CD4-positive, alpha-beta T cell (primary cell): ENCODE measurements at regions of chr16 and their contacts with region 1.

Region 1: DNA sequence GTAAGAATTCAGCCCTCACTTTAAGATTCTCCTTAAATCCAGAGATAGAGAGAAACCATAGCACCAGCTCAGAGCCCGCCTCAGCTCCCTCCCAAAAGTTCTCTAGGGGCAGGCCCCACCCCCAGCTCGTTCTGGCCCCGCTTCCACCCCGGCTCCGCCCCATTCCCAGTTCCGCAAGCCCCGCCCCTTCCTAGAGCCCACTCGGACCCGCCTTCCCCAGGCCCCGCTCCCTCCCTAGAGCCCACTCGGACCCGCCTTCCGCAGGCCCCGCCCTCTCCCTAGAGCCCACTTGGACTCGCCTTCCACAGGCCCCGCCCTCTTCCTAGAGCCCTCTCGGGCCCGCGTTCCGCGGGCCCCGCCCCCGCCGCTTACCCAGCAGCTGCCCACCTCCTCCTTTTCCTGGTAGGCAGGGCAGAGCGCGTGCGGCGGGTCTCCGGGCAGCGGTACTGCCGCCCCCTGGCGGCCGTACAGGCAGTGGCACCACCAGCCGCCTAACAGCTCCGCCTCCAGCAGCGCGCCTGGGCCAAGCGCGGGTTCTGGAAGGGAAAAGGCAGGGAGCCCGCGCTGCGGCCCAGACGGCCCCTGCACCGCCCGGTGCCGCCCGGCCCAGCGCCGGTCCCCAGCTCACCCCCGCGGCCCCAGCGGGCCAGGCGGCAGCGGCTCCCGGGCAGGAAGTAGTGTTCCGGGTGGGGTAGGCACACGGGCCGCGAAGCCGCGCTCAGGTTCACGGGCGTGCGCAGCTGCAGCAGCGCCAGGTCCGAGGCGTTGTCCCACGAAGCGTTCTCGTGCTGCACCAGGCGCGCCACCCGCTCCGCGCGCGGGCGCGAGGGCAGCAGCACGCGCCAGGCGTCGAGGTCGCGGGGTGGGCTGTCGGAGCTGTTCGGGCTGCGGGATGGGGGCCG is 6.8 kb upstream of the PRSS8 start:
- DNase-seq: peak; percentile 88 to 100 (median 96)
- ATAC-seq: peak; percentile 86
- H3K4me3 ChIP-seq: peak overlapping the region; percentile 41
- H3K4me3 Mint-ChIP-seq: peak overlapping the region; percentile 84
- H3K27ac ChIP-seq: peak overlapping the region; percentile 29 to 76
- H3K27ac Mint-ChIP-seq: peak overlapping the region; percentile 84
- H3K4me1 ChIP-seq: peaks cover 23% of the 10 kb centered on the region
- H3K4me1 Mint-ChIP-seq: peaks cover 13% of the 10 kb centered on the region
- H3K27me3 ChIP-seq: no peaks in the 10 kb centered on the region
- H3K27me3 Mint-ChIP-seq: peaks cover under 1% of the 10 kb centered on the region
- CTCF ChIP-seq: peak; percentile 79

Region 2: GRCh38 chr16:30957456-30958174 is 184.7 kb before region 1 on chr16 and contains the start of gene SETD1A:
- CTCF ChIA-PET with region 1: interaction called, 9 read pairs
- POLR2A ChIA-PET with region 1: interaction called, 8 read pairs
- intact Hi-C with region 1: loop called in 1 of 2 experiments (anchors 1 kb)
- DNase-seq: peak; percentile 94 to 99 (median 97)
- ATAC-seq: peak; percentile 86
- H3K4me3 ChIP-seq: peak within 1 kb of the TSS; percentile 82
- H3K4me3 Mint-ChIP-seq: peak within 1 kb of the TSS; percentile 97
- H3K27ac ChIP-seq: peak within 1 kb of the TSS; percentile 95
- H3K27ac Mint-ChIP-seq: peak within 1 kb of the TSS; percentile 97
- H3K4me1 ChIP-seq: peaks cover 37% of the 10 kb centered on the region
- H3K4me1 Mint-ChIP-seq: peaks cover 39% of the 10 kb centered on the region
- H3K27me3 ChIP-seq: no peaks in the 10 kb centered on the region
- H3K27me3 Mint-ChIP-seq: no peaks in the 10 kb centered on the region
- CTCF ChIP-seq: no peak
- total RNA-seq, gene SETD1A: 40.1 to 41.2 TPM

Region 3: GRCh38 chr16:30997000-30997886 is 145.1 kb before region 1 on chr16:
- CTCF ChIA-PET with region 1: interaction called, 4 read pairs
- POLR2A ChIA-PET with region 1: interaction called, 3 read pairs
- intact Hi-C with region 1: loop called in 1 of 2 experiments (anchors 1 kb)
- DNase-seq: peak; percentile 71 to 89 (median 78)
- ATAC-seq: peak; percentile 99
- H3K4me3 ChIP-seq: peak overlapping the region; percentile 58
- H3K4me3 Mint-ChIP-seq: peak overlapping the region; percentile 83
- H3K27ac ChIP-seq: no peak overlapping the region
- H3K27ac Mint-ChIP-seq: peak overlapping the region; percentile 39
- H3K4me1 ChIP-seq: peaks cover 13% of the 10 kb centered on the region
- H3K4me1 Mint-ChIP-seq: peaks cover 3% of the 10 kb centered on the region
- H3K27me3 ChIP-seq: no peaks in the 10 kb centered on the region
- H3K27me3 Mint-ChIP-seq: no peaks in the 10 kb centered on the region
- CTCF ChIP-seq: no peak

Region 4: GRCh38 chr16:31055613-31056012 is 86.7 kb before region 1 on chr16:
- CTCF ChIA-PET with region 1: no interaction called
- POLR2A ChIA-PET with region 1: no interaction called
- intact Hi-C with region 1: no loop called
- DNase-seq: no peak
- ATAC-seq: no peak
- H3K4me3 ChIP-seq: no peak overlapping the region
- H3K4me3 Mint-ChIP-seq: no peak overlapping the region
- H3K27ac ChIP-seq: no peak overlapping the region
- H3K27ac Mint-ChIP-seq: no peak overlapping the region
- H3K4me1 ChIP-seq: no peaks in the 10 kb centered on the region
- H3K4me1 Mint-ChIP-seq: no peaks in the 10 kb centered on the region
- H3K27me3 ChIP-seq: no peaks in the 10 kb centered on the region
- H3K27me3 Mint-ChIP-seq: no peaks in the 10 kb centered on the region
- CTCF ChIP-seq: no peak

Region 5: DNA sequence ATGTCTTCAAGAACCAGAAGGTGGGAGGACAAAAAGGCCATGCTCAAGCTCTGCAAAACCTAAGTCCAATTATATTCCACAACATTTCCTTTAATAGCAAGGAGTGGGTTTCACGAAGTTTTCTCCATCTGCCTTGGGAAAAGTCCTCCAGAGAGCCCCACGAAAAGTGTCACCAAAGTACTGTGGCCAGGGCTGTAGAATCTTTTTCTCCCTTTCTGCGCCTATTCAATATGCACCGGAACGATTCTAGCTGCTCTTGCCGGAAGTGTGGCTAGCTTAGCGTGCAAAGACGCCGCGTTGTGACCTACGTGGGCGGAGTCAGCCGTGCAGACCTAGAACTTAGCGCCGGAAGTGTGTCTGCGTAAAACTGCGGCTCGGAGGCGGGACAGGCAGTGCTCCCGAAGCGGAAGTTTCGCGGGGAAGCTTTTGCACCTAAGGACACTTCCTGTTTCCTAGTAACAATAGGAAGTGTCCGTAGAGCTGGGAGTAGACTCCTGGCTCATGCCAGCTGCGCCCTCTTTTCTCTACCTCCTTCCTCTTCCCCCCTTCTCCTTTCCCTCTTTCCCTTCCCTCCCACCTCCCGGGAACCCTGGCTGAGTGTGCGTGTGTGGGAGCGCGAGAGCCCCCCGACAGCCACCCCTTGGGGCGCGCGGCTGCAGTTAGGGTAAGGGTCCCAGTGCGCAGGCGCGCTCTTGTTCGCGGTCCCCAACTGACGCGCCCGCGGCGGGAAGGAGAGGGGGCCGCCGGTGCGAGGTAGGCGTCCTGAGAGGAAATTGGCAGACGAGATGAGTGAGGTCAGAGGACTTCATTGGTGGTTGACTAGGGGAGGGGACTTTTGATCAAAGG is 68.2 kb before region 1 on chr16 and contains the starts of genes ZNF646 and ZNF668:
- CTCF ChIA-PET with region 1: interaction called, 21 read pairs
- POLR2A ChIA-PET with region 1: interaction called, 64 read pairs
- intact Hi-C with region 1: loop called (anchors 1 kb)
- DNase-seq: peak; percentile 94 to 100 (median 97)
- ATAC-seq: peak; percentile 81
- H3K4me3 ChIP-seq: peak within 1 kb of the TSS; percentile 96
- H3K4me3 Mint-ChIP-seq: peak within 1 kb of the TSS; percentile 98
- H3K27ac ChIP-seq: peak within 1 kb of the TSS; percentile 93 to 95
- H3K27ac Mint-ChIP-seq: peak within 1 kb of the TSS; percentile 92
- H3K4me1 ChIP-seq: peaks cover 35% of the 10 kb centered on the region
- H3K4me1 Mint-ChIP-seq: peaks cover 34% of the 10 kb centered on the region
- H3K27me3 ChIP-seq: no peaks in the 10 kb centered on the region
- H3K27me3 Mint-ChIP-seq: no peaks in the 10 kb centered on the region
- CTCF ChIP-seq: no peak
- total RNA-seq, gene ZNF646: 14.3 to 16.6 TPM
- total RNA-seq, gene ZNF668: 4.5 to 6.0 TPM

Region 6: GRCh38 chr16:31108035-31108793 is 34.1 kb before region 1 on chr16 and contains the start of gene BCKDK:
- CTCF ChIA-PET with region 1: interaction called, 7 read pairs
- POLR2A ChIA-PET with region 1: interaction called, 3 read pairs
- intact Hi-C with region 1: loop called in 1 of 2 experiments (anchors 5 kb)
- DNase-seq: peak; percentile 22 to 76 (median 50)
- ATAC-seq: peak; percentile 78
- H3K4me3 ChIP-seq: peak within 1 kb of the TSS; percentile 59
- H3K4me3 Mint-ChIP-seq: peak within 1 kb of the TSS; percentile 76
- H3K27ac ChIP-seq: peak within 1 kb of the TSS in 1 of 2 donors; percentile 60
- H3K27ac Mint-ChIP-seq: peak within 1 kb of the TSS; percentile 53
- H3K4me1 ChIP-seq: peaks cover 25% of the 10 kb centered on the region
- H3K4me1 Mint-ChIP-seq: peaks cover 13% of the 10 kb centered on the region
- H3K27me3 ChIP-seq: no peaks in the 10 kb centered on the region
- H3K27me3 Mint-ChIP-seq: no peaks in the 10 kb centered on the region
- CTCF ChIP-seq: no peak
- total RNA-seq, gene BCKDK: 4.3 to 5.8 TPM

Region 7: DNA sequence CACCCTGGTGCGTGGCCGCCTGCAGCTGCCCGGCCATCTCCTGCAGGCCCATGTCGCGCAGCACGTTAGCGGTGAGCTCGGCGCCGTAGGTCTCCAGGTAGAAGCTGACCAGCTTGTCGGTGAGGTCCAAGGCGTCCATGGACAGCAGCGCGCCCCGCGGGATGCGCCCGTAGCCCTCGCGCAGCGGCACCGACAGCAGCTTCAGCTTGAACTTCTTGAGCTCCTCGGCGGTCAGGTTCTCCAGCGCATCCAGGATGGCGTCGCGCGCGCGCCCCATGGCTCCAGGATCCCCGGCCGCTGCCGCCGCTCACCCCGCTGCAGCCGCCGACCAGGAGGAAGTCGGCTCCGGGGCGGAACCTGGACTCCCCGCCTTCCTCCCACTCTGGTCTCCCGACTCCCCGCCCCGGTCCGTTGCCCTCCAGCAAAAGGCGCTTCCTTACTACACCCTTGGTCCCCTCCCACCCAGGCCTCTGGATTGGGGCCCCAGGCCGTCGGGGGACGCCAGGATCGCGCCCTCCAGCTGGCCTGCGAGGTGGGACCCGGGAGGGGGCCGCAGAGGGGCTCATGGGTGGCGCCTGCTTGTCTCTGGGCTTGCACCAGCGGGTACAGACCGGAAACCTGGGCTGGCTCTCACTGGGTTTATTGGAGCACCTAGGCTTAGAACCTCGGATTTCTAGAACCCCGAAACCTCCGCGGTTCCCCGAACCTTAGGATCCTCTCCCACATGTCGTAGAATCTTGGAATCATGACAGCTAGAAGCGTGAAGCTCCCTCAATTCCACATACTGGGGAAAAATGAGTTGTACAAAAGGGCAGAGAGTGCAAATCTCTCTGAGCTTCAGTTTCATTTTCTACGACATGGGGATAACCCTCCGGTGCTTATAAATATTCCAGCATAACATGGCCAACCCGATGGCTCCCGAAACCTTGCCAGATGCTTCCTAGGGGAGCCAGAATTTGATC is 60.3 kb after region 1 on chr16 and contains the start of gene PYCARD:
- CTCF ChIA-PET with region 1: interaction called, 4 read pairs
- POLR2A ChIA-PET with region 1: interaction called, 18 read pairs
- intact Hi-C with region 1: loop called in 1 of 2 experiments (anchors 10 kb)
- DNase-seq: peak in 7 of 14 experiments; percentile 24 to 64 (median 43)
- ATAC-seq: peak; percentile 27
- H3K4me3 ChIP-seq: peak within 1 kb of the TSS; percentile 92
- H3K4me3 Mint-ChIP-seq: peak within 1 kb of the TSS; percentile 94
- H3K27ac ChIP-seq: peak within 1 kb of the TSS in 1 of 2 donors; percentile 60
- H3K27ac Mint-ChIP-seq: peak within 1 kb of the TSS; percentile 90
- H3K4me1 ChIP-seq: peaks cover 45% of the 10 kb centered on the region
- H3K4me1 Mint-ChIP-seq: peaks cover 53% of the 10 kb centered on the region
- H3K27me3 ChIP-seq: no peaks in the 10 kb centered on the region
- H3K27me3 Mint-ChIP-seq: no peaks in the 10 kb centered on the region
- CTCF ChIP-seq: no peak
- total RNA-seq, gene PYCARD: 8.1 to 8.5 TPM